B cell (primary cell): ENCODE measurements at regions of chr21 and their contacts with region 1.

Region 1: DNA sequence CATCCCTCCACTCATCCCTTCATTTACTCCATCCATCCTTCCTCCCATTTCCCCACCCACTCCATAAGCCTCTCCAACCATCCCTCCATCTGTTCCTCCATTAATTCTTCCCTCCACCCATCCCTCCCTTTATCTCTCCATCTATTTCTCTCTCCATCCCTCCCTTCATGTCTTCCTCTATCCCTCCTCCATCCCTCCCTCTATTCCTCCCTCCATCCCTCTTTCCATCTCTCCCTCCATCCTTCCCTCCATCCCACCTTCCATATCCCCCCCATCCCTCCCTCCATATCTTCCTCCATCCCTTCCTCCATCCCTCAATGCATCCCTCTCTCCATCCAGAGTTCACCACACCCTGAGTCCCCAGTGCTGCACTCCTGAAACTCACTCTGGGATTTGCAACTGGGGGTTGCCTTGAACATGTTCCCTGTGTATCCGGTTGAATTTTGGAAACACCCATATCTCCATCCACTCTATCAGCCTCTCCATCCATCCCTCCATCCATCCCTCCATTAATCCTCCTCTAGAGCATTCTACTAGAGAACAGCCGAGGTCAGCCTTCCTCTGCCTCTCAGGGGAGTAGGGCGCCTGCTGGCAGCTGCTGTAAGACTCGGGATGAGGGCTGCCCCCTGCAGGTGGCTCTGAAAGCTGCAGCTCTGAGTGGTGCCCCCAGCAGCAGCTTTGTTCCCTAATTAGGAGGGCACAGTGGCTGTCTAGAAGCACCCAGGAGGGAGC is 39.4 kb downstream of the ABCG1 start:
- DNase-seq: peak; percentile 85
- ATAC-seq: peak; percentile 96
- H3K4me3 ChIP-seq: no peak overlapping the region
- H3K4me3 Mint-ChIP-seq: no peak overlapping the region
- H3K27ac ChIP-seq: no peak overlapping the region
- H3K27ac Mint-ChIP-seq: no peak overlapping the region
- H3K4me1 ChIP-seq: peaks cover 37 to 53% of the 10 kb centered on the region in 2 donors
- H3K4me1 Mint-ChIP-seq: peaks cover 48% of the 10 kb centered on the region
- H3K27me3 ChIP-seq: peaks cover 0 to 3% (median 0%) of the 10 kb centered on the region in 4 experiments
- H3K27me3 Mint-ChIP-seq: no peaks in the 10 kb centered on the region
- CTCF ChIP-seq: peak; percentile 89

Region 2: GRCh38 chr21:41752231-41752681 is 506.1 kb before region 1 on chr21:
- CTCF ChIA-PET with region 1: no interaction called
- POLR2A ChIA-PET with region 1: no interaction called
- intact Hi-C with region 1: no loop called
- DNase-seq: no peak
- ATAC-seq: no peak
- H3K4me3 ChIP-seq: no peak overlapping the region
- H3K4me3 Mint-ChIP-seq: no peak overlapping the region
- H3K27ac ChIP-seq: no peak overlapping the region
- H3K27ac Mint-ChIP-seq: no peak overlapping the region
- H3K4me1 ChIP-seq: no peaks in the 10 kb centered on the region
- H3K4me1 Mint-ChIP-seq: no peaks in the 10 kb centered on the region
- H3K27me3 ChIP-seq: no peaks in the 10 kb centered on the region
- H3K27me3 Mint-ChIP-seq: peaks cover 8% of the 10 kb centered on the region
- CTCF ChIP-seq: no peak

Region 3: GRCh38 chr21:42145569-42146272 is 112.6 kb before region 1 on chr21:
- CTCF ChIA-PET with region 1: interaction called, 89 read pairs
- POLR2A ChIA-PET with region 1: no interaction called
- intact Hi-C with region 1: loop called (anchors 1 kb)
- DNase-seq: peak; percentile 79
- ATAC-seq: peak; percentile 84
- H3K4me3 ChIP-seq: no peak overlapping the region
- H3K4me3 Mint-ChIP-seq: no peak overlapping the region
- H3K27ac ChIP-seq: no peak overlapping the region
- H3K27ac Mint-ChIP-seq: no peak overlapping the region
- H3K4me1 ChIP-seq: peaks cover 1 to 6% of the 10 kb centered on the region in 2 donors
- H3K4me1 Mint-ChIP-seq: peaks cover 7% of the 10 kb centered on the region
- H3K27me3 ChIP-seq: no peaks in the 10 kb centered on the region
- H3K27me3 Mint-ChIP-seq: no peaks in the 10 kb centered on the region
- CTCF ChIP-seq: peak; percentile 91

Region 4: GRCh38 chr21:42164064-42164789 is 94.1 kb before region 1 on chr21:
- CTCF ChIA-PET with region 1: interaction called, 148 read pairs
- POLR2A ChIA-PET with region 1: no interaction called
- intact Hi-C with region 1: loop called (anchors 1 kb)
- DNase-seq: peak; percentile 73
- ATAC-seq: peak; percentile 82
- H3K4me3 ChIP-seq: no peak overlapping the region
- H3K4me3 Mint-ChIP-seq: no peak overlapping the region
- H3K27ac ChIP-seq: no peak overlapping the region
- H3K27ac Mint-ChIP-seq: peak overlapping the region; percentile 43
- H3K4me1 ChIP-seq: peaks cover 8 to 15% of the 10 kb centered on the region in 2 donors
- H3K4me1 Mint-ChIP-seq: peaks cover 14% of the 10 kb centered on the region
- H3K27me3 ChIP-seq: peaks cover 0 to 5% (median 2%) of the 10 kb centered on the region in 4 experiments
- H3K27me3 Mint-ChIP-seq: peaks cover 3% of the 10 kb centered on the region
- CTCF ChIP-seq: peak; percentile 73

Region 5: GRCh38 chr21:42187976-42188653 is 70.2 kb before region 1 on chr21:
- CTCF ChIA-PET with region 1: interaction called, 14 read pairs
- POLR2A ChIA-PET with region 1: no interaction called
- intact Hi-C with region 1: no loop called
- DNase-seq: peak; percentile 85
- ATAC-seq: peak; percentile 97
- H3K4me3 ChIP-seq: peak overlapping the region in 3 of 5 experiments; percentile 11 to 32 (median 28)
- H3K4me3 Mint-ChIP-seq: peak overlapping the region; percentile 69
- H3K27ac ChIP-seq: peak overlapping the region; percentile 78 to 81
- H3K27ac Mint-ChIP-seq: peak overlapping the region; percentile 91
- H3K4me1 ChIP-seq: peaks cover 35 to 50% of the 10 kb centered on the region in 2 donors
- H3K4me1 Mint-ChIP-seq: peaks cover 50% of the 10 kb centered on the region
- H3K27me3 ChIP-seq: no peaks in the 10 kb centered on the region
- H3K27me3 Mint-ChIP-seq: no peaks in the 10 kb centered on the region
- CTCF ChIP-seq: no peak

Region 6: GRCh38 chr21:42227909-42228708 is 30.2 kb before region 1 on chr21:
- CTCF ChIA-PET with region 1: interaction called, 32 read pairs
- POLR2A ChIA-PET with region 1: no interaction called
- intact Hi-C with region 1: no loop called
- DNase-seq: peak; percentile 92
- ATAC-seq: peak; percentile 91
- H3K4me3 ChIP-seq: no peak overlapping the region
- H3K4me3 Mint-ChIP-seq: peak overlapping the region; percentile 74
- H3K27ac ChIP-seq: peak overlapping the region; percentile 57 to 68
- H3K27ac Mint-ChIP-seq: peak overlapping the region; percentile 88
- H3K4me1 ChIP-seq: peaks cover 39 to 54% of the 10 kb centered on the region in 2 donors
- H3K4me1 Mint-ChIP-seq: peaks cover 71% of the 10 kb centered on the region
- H3K27me3 ChIP-seq: no peaks in the 10 kb centered on the region
- H3K27me3 Mint-ChIP-seq: no peaks in the 10 kb centered on the region
- CTCF ChIP-seq: no peak

Region 7: DNA sequence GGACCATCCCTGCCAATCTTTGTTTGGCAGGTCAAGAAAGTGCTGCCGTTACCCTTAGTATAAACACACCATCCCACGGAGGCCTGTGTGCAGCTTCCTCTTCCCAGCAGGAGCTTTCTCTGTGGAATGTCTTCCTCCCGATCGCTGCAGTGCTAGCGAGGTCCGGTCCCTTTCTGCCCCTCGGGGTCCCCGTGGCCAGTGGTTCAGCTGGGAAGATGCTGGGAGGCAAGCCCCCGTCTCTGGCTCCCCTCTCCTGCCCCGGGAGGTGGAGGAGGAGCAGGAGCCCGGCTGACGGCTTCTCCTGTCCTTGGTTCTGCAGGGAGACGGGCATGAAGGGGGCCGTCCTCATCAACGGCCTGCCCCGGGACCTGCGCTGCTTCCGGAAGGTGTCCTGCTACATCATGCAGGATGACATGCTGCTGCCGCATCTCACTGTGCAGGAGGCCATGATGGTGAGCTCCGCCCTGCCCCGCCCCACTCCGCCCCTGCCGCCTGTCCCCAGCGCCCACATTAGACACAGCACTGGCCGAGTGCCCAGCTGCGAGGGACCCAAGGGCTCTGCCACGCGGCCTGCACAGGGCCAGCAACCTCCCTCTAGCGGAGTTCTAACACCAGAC is 14.8 kb after region 1 on chr21:
- CTCF ChIA-PET with region 1: interaction called, 29 read pairs
- POLR2A ChIA-PET with region 1: no interaction called
- intact Hi-C with region 1: no loop called
- DNase-seq: no peak
- ATAC-seq: no peak
- H3K4me3 ChIP-seq: no peak overlapping the region
- H3K4me3 Mint-ChIP-seq: no peak overlapping the region
- H3K27ac ChIP-seq: no peak overlapping the region
- H3K27ac Mint-ChIP-seq: no peak overlapping the region
- H3K4me1 ChIP-seq: peaks cover 15 to 17% of the 10 kb centered on the region in 2 donors
- H3K4me1 Mint-ChIP-seq: peaks cover 12% of the 10 kb centered on the region
- H3K27me3 ChIP-seq: no peaks in the 10 kb centered on the region
- H3K27me3 Mint-ChIP-seq: no peaks in the 10 kb centered on the region
- CTCF ChIP-seq: no peak

Region 8: DNA sequence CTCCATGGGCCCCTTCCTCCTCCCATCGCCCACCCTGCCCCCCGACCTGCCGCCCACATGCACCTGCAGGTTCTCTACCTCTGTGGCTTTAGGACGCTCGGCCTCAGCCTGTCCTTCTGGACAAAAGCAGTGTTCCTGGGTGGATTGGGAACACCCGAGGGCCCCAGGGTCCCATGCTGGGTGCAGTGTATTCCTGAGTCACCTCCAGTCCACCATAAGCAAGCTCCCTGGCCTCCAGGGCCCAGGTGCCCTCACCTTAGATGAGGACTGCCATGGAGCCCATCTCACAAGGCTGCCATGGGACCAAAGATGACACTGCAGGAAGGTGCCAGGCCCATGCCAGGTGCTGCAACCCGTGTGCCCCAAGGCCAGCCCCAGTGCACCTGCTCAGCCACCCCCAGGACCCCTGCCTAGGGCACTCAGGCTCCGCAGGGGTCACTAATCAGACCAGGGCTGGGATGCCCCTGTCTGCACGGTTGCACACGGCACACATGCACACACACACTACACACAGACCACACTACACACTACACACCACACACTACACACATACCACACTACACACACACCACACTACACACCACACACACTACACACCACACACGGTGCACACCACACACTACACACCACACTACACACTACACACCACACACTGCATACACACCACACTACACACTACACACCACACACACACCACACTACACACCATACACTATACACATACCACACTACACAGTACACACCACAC is 33.9 kb after region 1 on chr21:
- CTCF ChIA-PET with region 1: no interaction called
- POLR2A ChIA-PET with region 1: no interaction called
- intact Hi-C with region 1: no loop called
- DNase-seq: no peak
- ATAC-seq: peak; percentile 28
- H3K4me3 ChIP-seq: no peak overlapping the region
- H3K4me3 Mint-ChIP-seq: no peak overlapping the region
- H3K27ac ChIP-seq: no peak overlapping the region
- H3K27ac Mint-ChIP-seq: no peak overlapping the region
- H3K4me1 ChIP-seq: no peaks in the 10 kb centered on the region
- H3K4me1 Mint-ChIP-seq: no peaks in the 10 kb centered on the region
- H3K27me3 ChIP-seq: no peaks in the 10 kb centered on the region
- H3K27me3 Mint-ChIP-seq: no peaks in the 10 kb centered on the region
- CTCF ChIP-seq: no peak

Region 9: DNA sequence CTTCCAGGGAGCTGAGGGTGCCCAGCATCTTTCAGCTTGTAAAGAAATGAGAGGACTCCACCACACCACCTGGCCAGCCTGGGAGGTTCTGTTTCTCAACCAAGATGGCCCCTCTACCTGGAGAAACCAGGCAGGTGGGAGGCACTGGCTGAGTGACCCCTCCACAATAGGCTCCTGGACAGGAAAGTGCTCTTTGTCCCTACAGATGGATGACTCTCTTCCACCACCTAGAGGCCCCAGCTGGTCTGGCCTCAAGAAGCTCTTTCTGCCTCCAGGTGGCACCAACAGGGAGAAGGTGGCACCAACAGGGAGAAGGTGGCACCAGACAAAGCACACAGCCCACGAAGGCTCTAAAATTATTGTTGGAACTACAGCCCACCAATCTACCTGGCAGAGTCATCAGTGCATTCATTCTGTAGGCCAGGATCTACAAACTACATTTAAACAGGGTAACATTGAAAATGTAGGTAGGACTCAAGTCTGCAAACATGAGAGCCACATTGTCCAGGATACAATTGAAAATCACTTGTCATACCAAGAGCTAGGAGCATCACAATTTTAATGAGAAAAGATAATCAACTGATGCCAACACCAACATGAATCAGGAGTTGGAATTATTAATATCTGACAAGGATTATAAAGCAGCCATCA is 123.1 kb after region 1 on chr21:
- CTCF ChIA-PET with region 1: no interaction called
- POLR2A ChIA-PET with region 1: no interaction called
- intact Hi-C with region 1: no loop called
- DNase-seq: no peak
- ATAC-seq: no peak
- H3K4me3 ChIP-seq: no peak overlapping the region
- H3K4me3 Mint-ChIP-seq: no peak overlapping the region
- H3K27ac ChIP-seq: no peak overlapping the region
- H3K27ac Mint-ChIP-seq: no peak overlapping the region
- H3K4me1 ChIP-seq: peaks cover 21 to 27% of the 10 kb centered on the region in 2 donors
- H3K4me1 Mint-ChIP-seq: peaks cover 33% of the 10 kb centered on the region
- H3K27me3 ChIP-seq: peaks cover 0 to 3% (median 0%) of the 10 kb centered on the region in 4 experiments
- H3K27me3 Mint-ChIP-seq: peaks cover 3% of the 10 kb centered on the region
- CTCF ChIP-seq: no peak